Motor neuron (in vitro differentiated cells): ENCODE measurements at regions of chr10 and their contacts with region 1.

Region 1: GRCh38 chr10:95841661-95842498 is 65.9 kb upstream of the CC2D2B start:
- ATAC-seq: peak in 4 of 8 experiments; percentile 53 to 85 (median 78)
- H3K4me3 ChIP-seq: no peak overlapping the region
- H3K27ac ChIP-seq: no peak overlapping the region
- H3K4me1 ChIP-seq: no peaks in the 10 kb centered on the region

Region 2: GRCh38 chr10:95693668-95694534 is 148.0 kb before region 1 on chr10 and contains the start of gene TCTN3:
- in situ Hi-C with region 1: loop called in 1 of 9 experiments (anchors 10 kb)
- ATAC-seq: peak; percentile 98 to 100 (median 99)
- H3K4me3 ChIP-seq: peak within 1 kb of the TSS; percentile 71 to 91 (median 73)
- H3K27ac ChIP-seq: peak within 1 kb of the TSS; percentile 28 to 64
- H3K4me1 ChIP-seq: peaks cover 8 to 13% of the 10 kb centered on the region in 2 donors
- total RNA-seq, gene TCTN3: 21.9 to 62.4 (median 30.4) TPM

Region 3: GRCh38 chr10:95716466-95717224 is 125.2 kb before region 1 on chr10:
- in situ Hi-C with region 1: loop called in 1 of 9 experiments (anchors 25 kb)
- ATAC-seq: peak in 3 of 8 experiments; percentile 27 to 46 (median 33)
- H3K4me3 ChIP-seq: no peak overlapping the region
- H3K27ac ChIP-seq: no peak overlapping the region
- H3K4me1 ChIP-seq: no peaks in the 10 kb centered on the region